Caco-2 (cell line): ENCODE measurements at regions of chr6 and their contacts with region 1.

Region 1: DNA sequence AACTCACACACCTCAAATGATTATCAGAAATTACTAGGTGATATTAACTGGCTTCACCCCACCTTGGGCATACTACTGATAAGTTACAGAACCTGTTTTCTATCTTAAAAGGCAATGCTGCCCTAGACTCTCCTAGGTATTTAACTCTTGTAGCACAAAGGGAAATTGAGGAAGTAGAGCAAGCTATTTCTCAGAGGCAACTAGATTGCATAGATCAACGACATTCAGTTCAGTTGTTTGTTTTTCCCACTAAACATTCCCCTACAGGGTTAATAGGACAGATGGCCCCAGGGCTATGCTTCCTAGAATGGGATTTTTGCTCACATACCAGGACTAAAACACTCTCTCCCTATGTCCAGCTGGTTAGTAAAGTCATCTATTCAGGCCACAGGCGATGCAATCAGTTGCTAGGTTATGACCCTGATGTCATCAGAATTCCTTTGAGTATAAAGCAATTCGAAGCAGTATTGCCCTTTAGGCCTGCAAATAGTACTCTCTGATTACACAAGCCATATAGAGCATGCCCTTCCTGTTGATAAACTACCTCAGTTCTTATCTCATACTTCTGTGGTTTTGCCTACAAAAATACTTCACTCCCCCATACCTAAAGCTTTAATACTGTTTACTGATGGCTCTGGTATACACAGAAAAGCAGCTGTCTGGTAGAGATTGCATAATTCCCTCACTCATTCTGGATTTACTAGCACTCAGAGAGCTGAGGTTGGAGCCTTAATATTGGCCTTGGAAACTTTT is 67.4 kb upstream of the ASCC3 start:
- DNase-seq: peak; percentile 72 to 76
- H3K4me3 ChIP-seq: no peak overlapping the region
- H3K4me3 Mint-ChIP-seq: no peak overlapping the region
- H3K27ac Mint-ChIP-seq: peak overlapping the region; percentile 69
- H3K4me1 ChIP-seq: peaks cover 16% of the 10 kb centered on the region
- H3K4me1 Mint-ChIP-seq: peaks cover 12% of the 10 kb centered on the region
- H3K27me3 ChIP-seq: no peaks in the 10 kb centered on the region
- H3K27me3 Mint-ChIP-seq: no peaks in the 10 kb centered on the region
- CTCF ChIP-seq: no peak

Region 2: GRCh38 chr6:100892116-100892515 is 56.4 kb before region 1 on chr6:
- CTCF ChIA-PET with region 1: no interaction called
- POLR2A ChIA-PET with region 1: no interaction called
- intact Hi-C with region 1: loop called (anchors 2 kb)
- DNase-seq: no peak
- H3K4me3 ChIP-seq: no peak overlapping the region
- H3K4me3 Mint-ChIP-seq: no peak overlapping the region
- H3K27ac Mint-ChIP-seq: no peak overlapping the region
- H3K4me1 ChIP-seq: peaks cover 22% of the 10 kb centered on the region
- H3K4me1 Mint-ChIP-seq: no peaks in the 10 kb centered on the region
- H3K27me3 ChIP-seq: no peaks in the 10 kb centered on the region
- H3K27me3 Mint-ChIP-seq: no peaks in the 10 kb centered on the region
- CTCF ChIP-seq: no peak

Region 3: GRCh38 chr6:100923481-100924165 is 24.9 kb before region 1 on chr6:
- CTCF ChIA-PET with region 1: no interaction called
- POLR2A ChIA-PET with region 1: interaction called, 5 read pairs
- intact Hi-C with region 1: loop called (anchors 1 kb)
- DNase-seq: no peak
- H3K4me3 ChIP-seq: no peak overlapping the region
- H3K4me3 Mint-ChIP-seq: no peak overlapping the region
- H3K27ac Mint-ChIP-seq: no peak overlapping the region
- H3K4me1 ChIP-seq: peaks cover 12% of the 10 kb centered on the region
- H3K4me1 Mint-ChIP-seq: peaks cover 23% of the 10 kb centered on the region
- H3K27me3 ChIP-seq: no peaks in the 10 kb centered on the region
- H3K27me3 Mint-ChIP-seq: no peaks in the 10 kb centered on the region
- CTCF ChIP-seq: no peak